ENCODE measurements at regions of chr12 and their contacts with region 1.

Region 1: GRCh38 chr12:19129486-19130223 is at the start of gene PLEKHA5:
- DNase-seq: peak; percentile 39 to 83
- H3K4me3 ChIP-seq: peak within 1 kb of the TSS; percentile 75
- H3K27ac ChIP-seq: peak within 1 kb of the TSS; percentile 57
- H3K4me1 ChIP-seq: peaks cover 21% of the 10 kb centered on the region
- H3K27me3 ChIP-seq: no peaks in the 10 kb centered on the region
- CTCF ChIP-seq: no peak
- total RNA-seq, gene PLEKHA5: 51.3 and 54.1 TPM in 2 replicates

Region 2: GRCh38 chr12:18723756-18724155 is 405.9 kb before region 1 on chr12:
- CTCF ChIA-PET with region 1: no interaction called
- POLR2A ChIA-PET with region 1: no interaction called
- intact Hi-C with region 1: loop called (anchors 10 kb)
- DNase-seq: peak; percentile 39 to 74
- H3K4me3 ChIP-seq: no peak overlapping the region
- H3K27ac ChIP-seq: no peak overlapping the region
- H3K4me1 ChIP-seq: peaks cover 4% of the 10 kb centered on the region; the same call in 1 of the 2 replicates
- H3K27me3 ChIP-seq: no peaks in the 10 kb centered on the region
- CTCF ChIP-seq: no peak

Region 3: GRCh38 chr12:18998343-18999261 is 131.1 kb before region 1 on chr12:
- CTCF ChIA-PET with region 1: no interaction called
- POLR2A ChIA-PET with region 1: no interaction called
- intact Hi-C with region 1: loop called (anchors 5 kb)
- DNase-seq: peak in 1 of 2 experiments; percentile 30
- H3K4me3 ChIP-seq: no peak overlapping the region
- H3K27ac ChIP-seq: peak overlapping the region; percentile 46; the same call in 1 of the 2 replicates
- H3K4me1 ChIP-seq: peaks cover 11% of the 10 kb centered on the region
- H3K27me3 ChIP-seq: no peaks in the 10 kb centered on the region
- CTCF ChIP-seq: no peak

Region 4: DNA sequence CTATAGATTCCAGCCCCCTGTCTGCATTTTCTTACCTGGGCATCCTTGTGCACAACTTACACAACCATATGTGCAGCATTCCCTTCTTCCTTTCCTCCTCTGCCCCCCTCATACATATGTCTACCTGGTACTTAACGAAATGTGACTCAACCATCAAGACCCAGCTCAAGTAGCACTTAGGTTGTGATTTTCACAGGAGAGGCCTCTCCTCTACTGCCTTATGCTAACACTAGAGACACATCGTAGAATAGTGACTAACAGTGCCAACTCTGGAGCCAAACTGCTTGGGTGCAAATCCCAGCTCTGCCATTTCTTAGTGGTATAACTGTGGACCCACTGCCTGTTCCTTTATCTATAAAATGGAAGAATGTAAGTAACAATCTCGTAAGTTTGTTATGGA is 24.2 kb before region 1 on chr12:
- CTCF ChIA-PET with region 1: no interaction called
- POLR2A ChIA-PET with region 1: interaction called, 24 read pairs
- intact Hi-C with region 1: no loop called
- DNase-seq: no peak
- H3K4me3 ChIP-seq: no peak overlapping the region
- H3K27ac ChIP-seq: no peak overlapping the region
- H3K4me1 ChIP-seq: no peaks in the 10 kb centered on the region
- H3K27me3 ChIP-seq: no peaks in the 10 kb centered on the region
- CTCF ChIP-seq: no peak

Region 5: DNA sequence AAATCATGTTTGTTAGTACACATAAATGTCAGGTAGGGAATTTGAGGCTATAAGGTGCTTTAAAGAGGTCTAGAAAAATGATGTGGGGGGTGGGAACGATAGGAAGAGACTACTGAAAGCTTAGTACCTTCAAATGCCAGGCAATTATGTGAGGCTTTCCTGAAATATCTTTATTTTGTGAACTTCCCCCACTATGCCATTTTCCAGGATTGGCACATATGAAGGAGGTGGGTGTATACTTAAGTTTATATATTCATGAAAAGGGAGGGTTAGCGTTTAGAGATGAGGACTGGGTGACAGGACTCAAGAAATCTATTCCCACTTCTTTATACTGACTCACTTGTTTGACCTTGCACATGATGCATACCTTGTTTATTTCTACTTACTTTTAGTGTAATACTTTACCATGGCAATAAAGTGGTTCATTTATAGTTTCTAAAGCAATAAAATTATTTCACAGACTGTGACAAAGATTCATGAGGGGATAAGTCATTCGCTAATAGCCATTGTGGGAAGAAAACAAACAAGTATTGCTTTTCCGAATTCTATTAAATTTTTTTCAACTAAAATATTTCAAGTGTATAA is 76.9 kb after region 1 on chr12:
- CTCF ChIA-PET with region 1: no interaction called
- POLR2A ChIA-PET with region 1: no interaction called
- intact Hi-C with region 1: no loop called
- DNase-seq: no peak
- H3K4me3 ChIP-seq: no peak overlapping the region
- H3K27ac ChIP-seq: no peak overlapping the region
- H3K4me1 ChIP-seq: no peaks in the 10 kb centered on the region
- H3K27me3 ChIP-seq: no peaks in the 10 kb centered on the region
- CTCF ChIP-seq: no peak

Region 6: GRCh38 chr12:19243551-19243950 is 113.9 kb after region 1 on chr12:
- CTCF ChIA-PET with region 1: interaction called, 25 read pairs
- POLR2A ChIA-PET with region 1: no interaction called
- intact Hi-C with region 1: no loop called
- DNase-seq: no peak
- H3K4me3 ChIP-seq: no peak overlapping the region
- H3K27ac ChIP-seq: no peak overlapping the region
- H3K4me1 ChIP-seq: no peaks in the 10 kb centered on the region
- H3K27me3 ChIP-seq: no peaks in the 10 kb centered on the region
- CTCF ChIP-seq: no peak